CD8-positive, alpha-beta memory T cell (primary cell): ENCODE measurements at regions of chr14 and their contacts with region 1.

Region 1: GRCh38 chr14:99215277-99215676 is 56.7 kb downstream of the BCL11B start:
- DNase-seq: no peak
- H3K4me3 ChIP-seq: peak overlapping the region; percentile 33
- H3K4me3 Mint-ChIP-seq: peak overlapping the region; percentile 42 to 84 (median 77)
- H3K27ac ChIP-seq: no peak overlapping the region
- H3K27ac Mint-ChIP-seq: peak overlapping the region; percentile 17 to 96 (median 86)
- H3K4me1 ChIP-seq: peaks cover 95% of the 10 kb centered on the region
- H3K4me1 Mint-ChIP-seq: peaks cover 94 to 99% (median 99%) of the 10 kb centered on the region in 3 donors
- H3K27me3 ChIP-seq: no peaks in the 10 kb centered on the region
- H3K27me3 Mint-ChIP-seq: peaks cover 0 to 7% of the 10 kb centered on the region in 2 donors

Region 2: GRCh38 chr14:99205086-99205688 is 10.1 kb before region 1 on chr14:
- CTCF ChIA-PET with region 1: interaction called, 10 read pairs
- POLR2A ChIA-PET with region 1: interaction called, 6 read pairs
- DNase-seq: no peak
- H3K4me3 ChIP-seq: peak overlapping the region; percentile 41
- H3K4me3 Mint-ChIP-seq: peak overlapping the region; percentile 9 to 84 (median 80)
- H3K27ac ChIP-seq: no peak overlapping the region
- H3K27ac Mint-ChIP-seq: peak overlapping the region; percentile 82 to 98 (median 94)
- H3K4me1 ChIP-seq: peaks cover 100% of the 10 kb centered on the region
- H3K4me1 Mint-ChIP-seq: peaks cover 95 to 100% (median 97%) of the 10 kb centered on the region in 3 donors
- H3K27me3 ChIP-seq: no peaks in the 10 kb centered on the region
- H3K27me3 Mint-ChIP-seq: peaks cover 0 to 2% of the 10 kb centered on the region in 2 donors